Left ventricle myocardium superior (tissue), 1 donor: ENCODE measurements at regions of chr10 and their contacts with region 1.

Region 1: GRCh38 chr10:72319416-72320254 is 35.1 kb downstream of the DNAJB12 start:
- DNase-seq: peak; percentile 98
- ATAC-seq: peak; percentile 83

Region 2: GRCh38 chr10:72273410-72274212 is 46.0 kb before region 1 on chr10 and contains the start of gene DDIT4:
- intact Hi-C with region 1: loop called (anchors 10 kb)
- DNase-seq: peak; percentile 100
- ATAC-seq: peak; percentile 89
- total RNA-seq, gene DDIT4: 64.2 TPM